Activated CD4-positive, alpha-beta T cell treated with anti-CD3 and anti-CD28 coated beads, Interleukin-2, amount 10 ng/mL, durations not matched to agents 24 days and 14 days (primary cell): ENCODE measurements at regions of chr5 and their contacts with region 1.

Region 1: DNA sequence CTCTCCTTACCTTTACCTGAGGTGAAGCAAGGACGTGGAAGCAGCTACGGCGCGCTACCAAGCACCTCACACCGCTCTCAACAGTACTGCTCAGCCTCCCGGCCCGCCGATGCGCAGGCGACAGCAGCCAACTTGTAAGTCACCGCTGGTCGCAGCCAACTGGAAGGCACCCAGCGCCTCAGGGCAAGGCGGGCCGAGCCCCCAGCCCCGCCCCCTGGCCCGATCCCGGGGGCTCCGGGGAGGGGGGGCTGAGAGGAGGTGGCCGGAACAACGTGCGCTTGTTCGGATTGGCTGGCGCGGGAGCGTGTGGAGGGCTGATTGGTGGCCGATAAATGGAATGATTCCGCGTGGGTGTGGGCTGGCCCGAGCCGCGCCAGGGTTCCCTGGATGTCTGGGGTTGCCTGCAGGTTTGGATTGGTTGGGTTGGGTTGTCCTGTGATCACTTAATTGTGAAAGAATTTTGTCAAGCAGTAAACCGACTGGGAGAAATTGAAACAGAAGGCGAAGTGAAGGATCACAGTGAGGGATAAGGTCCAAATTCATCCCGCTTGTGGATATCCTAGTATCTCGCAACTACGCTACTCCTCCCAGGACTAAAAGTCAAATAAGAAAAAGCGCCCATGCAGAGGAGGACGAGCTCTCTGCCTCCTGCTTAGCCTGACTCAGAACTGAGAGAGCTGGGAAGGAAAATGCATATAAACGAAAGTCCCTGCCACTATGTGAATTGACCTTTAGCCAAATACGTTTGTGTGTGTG is at the start of gene STARD4:
- DNase-seq: peak; percentile 98
- H3K4me3 Mint-ChIP-seq: peak within 1 kb of the TSS; percentile 99
- H3K27ac Mint-ChIP-seq: peak within 1 kb of the TSS; percentile 99
- H3K4me1 Mint-ChIP-seq: peaks cover 51% of the 10 kb centered on the region
- H3K27me3 Mint-ChIP-seq: no peaks in the 10 kb centered on the region
- total RNA-seq, gene STARD4: 118 and 122 TPM in 2 replicates

Region 2: DNA sequence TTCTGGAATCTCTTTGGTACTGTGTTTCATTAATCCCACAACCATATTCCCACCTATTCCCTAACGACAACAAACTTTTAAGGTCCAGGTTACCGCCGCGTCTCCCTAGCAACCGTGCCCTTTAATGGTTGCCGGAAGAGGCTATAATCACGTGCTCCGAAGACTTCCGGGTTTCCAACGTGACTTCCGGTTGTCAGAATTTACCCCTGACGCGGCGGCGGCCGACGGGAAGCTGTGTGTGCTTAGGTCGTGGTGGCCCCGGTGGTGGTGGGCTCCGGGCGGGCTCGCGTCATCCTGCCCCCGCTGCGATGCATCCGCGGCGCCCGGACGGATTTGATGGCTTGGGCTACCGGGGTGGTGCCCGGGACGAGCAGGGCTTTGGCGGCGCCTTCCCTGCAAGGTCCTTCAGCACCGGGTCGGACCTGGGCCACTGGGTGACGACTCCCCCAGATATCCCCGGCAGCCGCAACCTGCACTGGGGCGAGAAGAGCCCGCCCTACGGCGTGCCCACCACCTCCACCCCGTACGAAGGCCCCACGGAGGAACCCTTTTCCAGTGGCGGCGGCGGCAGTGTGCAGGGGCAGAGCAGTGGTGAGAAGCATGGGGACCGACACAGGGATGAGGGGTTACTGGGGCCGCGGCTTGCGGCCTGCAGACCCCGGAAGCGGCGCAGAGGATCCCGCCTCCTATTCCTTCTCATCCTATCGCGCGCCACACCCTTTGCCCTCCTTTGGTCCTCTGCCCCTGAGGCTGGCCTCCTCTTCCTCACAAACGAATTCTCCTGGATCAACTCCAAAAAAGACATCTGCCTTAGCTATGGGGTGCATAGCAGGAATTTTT is 773.5 kb before region 1 on chr5 and contains the start of gene SLC25A46:
- intact Hi-C with region 1: loop called (anchors 5 kb)
- DNase-seq: peak; percentile 97
- H3K4me3 Mint-ChIP-seq: peak within 1 kb of the TSS; percentile 97
- H3K27ac Mint-ChIP-seq: peak within 1 kb of the TSS; percentile 96
- H3K4me1 Mint-ChIP-seq: peaks cover 24% of the 10 kb centered on the region
- H3K27me3 Mint-ChIP-seq: peaks cover 14% of the 10 kb centered on the region
- total RNA-seq, gene SLC25A46: 47.0 and 49.4 TPM in 2 replicates

Region 3: DNA sequence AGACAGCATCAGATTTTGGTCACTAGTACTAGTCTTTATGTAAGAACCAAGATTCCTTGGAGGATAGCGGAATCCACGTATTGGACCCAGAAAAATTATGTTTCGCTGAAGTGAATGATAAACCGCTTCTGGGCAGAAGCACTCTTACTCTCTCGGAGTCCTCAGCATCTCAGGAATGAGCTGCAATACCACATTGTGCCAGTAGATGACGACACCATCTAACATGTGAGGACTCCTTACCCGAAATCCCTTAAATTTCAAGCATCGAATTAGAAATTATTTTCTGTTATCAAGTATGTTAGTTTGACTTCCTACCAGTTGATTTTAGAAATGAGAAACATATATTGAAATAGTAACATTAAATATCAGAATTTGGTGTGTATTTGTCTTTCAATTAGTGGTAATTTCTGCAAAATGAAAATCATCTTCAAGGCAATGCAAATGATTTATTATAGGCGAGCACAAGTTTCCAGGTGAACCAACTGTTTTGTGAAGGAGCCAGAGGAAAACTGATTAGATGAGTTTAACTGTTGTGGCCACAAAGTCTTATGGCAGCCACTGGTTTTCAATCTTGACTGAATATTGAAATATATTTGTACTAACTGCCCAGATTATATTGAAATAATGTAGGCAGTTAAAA is 354.3 kb before region 1 on chr5:
- intact Hi-C with region 1: loop called (anchors 5 kb)
- DNase-seq: peak; percentile 94
- H3K4me3 Mint-ChIP-seq: no peak overlapping the region
- H3K27ac Mint-ChIP-seq: no peak overlapping the region
- H3K4me1 Mint-ChIP-seq: peaks cover 2% of the 10 kb centered on the region
- H3K27me3 Mint-ChIP-seq: peaks cover 3% of the 10 kb centered on the region

Region 4: DNA sequence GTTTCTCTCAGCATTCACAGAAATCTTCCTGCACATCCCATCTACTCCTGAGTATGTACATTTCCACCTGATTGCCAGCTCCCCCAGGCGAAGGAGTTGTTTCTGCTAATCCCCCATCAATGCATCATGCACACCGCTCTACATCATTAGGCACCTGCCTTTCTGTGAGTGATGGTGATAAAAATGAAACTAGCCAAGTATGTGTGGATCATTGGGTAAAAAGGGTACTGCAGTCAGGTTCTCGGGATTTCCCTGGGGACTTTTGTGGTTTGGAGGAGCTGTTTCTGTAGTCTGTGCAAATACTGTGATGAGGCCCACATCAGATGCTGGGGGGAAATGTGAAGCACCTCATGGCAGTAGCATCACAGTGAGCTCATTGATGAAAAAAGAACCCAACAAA is 257.9 kb before region 1 on chr5:
- intact Hi-C with region 1: loop called (anchors 2 kb)
- DNase-seq: peak; percentile 90
- H3K4me3 Mint-ChIP-seq: peak overlapping the region; percentile 39
- H3K27ac Mint-ChIP-seq: peak overlapping the region; percentile 91
- H3K4me1 Mint-ChIP-seq: peaks cover 61% of the 10 kb centered on the region
- H3K27me3 Mint-ChIP-seq: no peaks in the 10 kb centered on the region

Region 5: GRCh38 chr5:111494364-111494999 is 18.1 kb before region 1 on chr5:
- intact Hi-C with region 1: loop called (anchors 1 kb)
- DNase-seq: no peak
- H3K4me3 Mint-ChIP-seq: no peak overlapping the region
- H3K27ac Mint-ChIP-seq: peak overlapping the region; percentile 73
- H3K4me1 Mint-ChIP-seq: peaks cover 27% of the 10 kb centered on the region
- H3K27me3 Mint-ChIP-seq: no peaks in the 10 kb centered on the region

Region 6: DNA sequence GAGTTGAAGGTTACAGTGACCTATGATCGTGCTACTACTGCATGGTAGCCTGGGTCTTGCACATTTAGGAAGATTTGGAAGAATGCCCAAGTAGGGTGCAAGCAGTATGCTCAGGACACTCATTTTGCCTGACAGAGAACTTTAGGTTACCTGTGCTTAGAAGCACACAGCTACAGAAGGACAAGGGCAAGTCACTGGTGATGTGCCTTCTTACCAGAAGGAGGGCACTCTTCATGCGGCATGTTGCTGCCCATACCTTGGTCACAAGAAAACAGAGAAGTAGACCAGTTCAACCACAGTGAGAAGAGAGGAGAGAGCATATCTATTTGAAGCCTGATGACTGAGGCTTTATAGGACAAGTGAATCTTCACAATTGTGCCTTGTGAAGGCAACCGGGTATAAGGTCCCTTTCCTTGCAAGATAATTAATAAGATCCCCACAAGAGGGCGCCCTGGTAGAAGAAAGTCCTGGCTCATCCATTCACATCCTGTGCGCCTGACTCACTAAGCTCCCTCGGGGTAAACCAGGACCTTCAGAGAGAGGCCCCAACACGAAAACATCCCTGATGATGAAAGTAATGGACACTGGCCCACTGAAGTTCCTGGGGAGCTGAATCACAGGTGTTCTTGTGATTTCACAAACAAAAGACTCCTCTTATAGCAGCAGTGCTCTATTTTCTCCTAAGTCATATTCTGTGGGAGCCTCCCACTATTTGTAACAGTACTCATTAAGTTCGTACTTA is 37.9 kb after region 1 on chr5:
- intact Hi-C with region 1: loop called (anchors 2 kb)
- DNase-seq: peak; percentile 93
- H3K4me3 Mint-ChIP-seq: peak overlapping the region; percentile 20
- H3K27ac Mint-ChIP-seq: peak overlapping the region; percentile 72
- H3K4me1 Mint-ChIP-seq: peaks cover 36% of the 10 kb centered on the region
- H3K27me3 Mint-ChIP-seq: peaks cover 4% of the 10 kb centered on the region

Region 7: GRCh38 chr5:112160652-112161391 is 648.3 kb after region 1 on chr5:
- intact Hi-C with region 1: loop called (anchors 1 kb)
- DNase-seq: peak; percentile 98
- H3K4me3 Mint-ChIP-seq: peak overlapping the region; percentile 96
- H3K27ac Mint-ChIP-seq: peak overlapping the region; percentile 94
- H3K4me1 Mint-ChIP-seq: peaks cover 25% of the 10 kb centered on the region
- H3K27me3 Mint-ChIP-seq: peaks cover 2% of the 10 kb centered on the region